HEK293 (cell line): ENCODE measurements at regions of chr1 and their contacts with region 1.

Region 1: DNA sequence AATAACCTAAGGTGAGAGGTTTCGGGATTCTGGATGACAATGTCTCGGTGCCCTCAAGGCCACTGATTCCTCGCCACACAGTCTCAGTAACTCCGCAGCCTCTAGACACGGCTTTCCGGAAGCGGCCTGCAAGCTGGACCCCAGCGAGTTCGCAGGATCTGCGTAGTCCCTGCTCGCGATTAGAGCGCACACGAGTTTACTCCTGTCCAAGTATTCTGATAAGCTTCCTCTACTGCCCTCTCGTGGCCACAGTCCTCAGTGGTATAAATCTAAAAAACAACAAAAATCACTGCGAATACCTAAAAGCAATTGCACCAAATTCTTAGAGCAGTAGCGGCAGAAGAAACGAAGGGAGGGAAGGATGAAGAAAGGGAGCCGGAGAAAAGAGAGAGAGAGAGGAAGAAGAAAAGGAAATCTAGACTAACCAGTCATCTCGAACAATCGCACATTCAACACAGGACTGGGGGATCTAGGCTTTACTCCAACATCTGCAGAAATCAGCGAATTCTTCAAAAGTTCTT is 1.1 kb upstream of the PLXNA2 start:
- H3K4me3 ChIP-seq: no peak overlapping the region
- H3K27ac ChIP-seq: peak overlapping the region; percentile 56; the same call in 1 of the 2 replicates
- H3K4me1 ChIP-seq: no peaks in the 10 kb centered on the region; the same call in 1 of the 2 replicates
- CTCF ChIP-seq: peak; percentile 78

Region 2: DNA sequence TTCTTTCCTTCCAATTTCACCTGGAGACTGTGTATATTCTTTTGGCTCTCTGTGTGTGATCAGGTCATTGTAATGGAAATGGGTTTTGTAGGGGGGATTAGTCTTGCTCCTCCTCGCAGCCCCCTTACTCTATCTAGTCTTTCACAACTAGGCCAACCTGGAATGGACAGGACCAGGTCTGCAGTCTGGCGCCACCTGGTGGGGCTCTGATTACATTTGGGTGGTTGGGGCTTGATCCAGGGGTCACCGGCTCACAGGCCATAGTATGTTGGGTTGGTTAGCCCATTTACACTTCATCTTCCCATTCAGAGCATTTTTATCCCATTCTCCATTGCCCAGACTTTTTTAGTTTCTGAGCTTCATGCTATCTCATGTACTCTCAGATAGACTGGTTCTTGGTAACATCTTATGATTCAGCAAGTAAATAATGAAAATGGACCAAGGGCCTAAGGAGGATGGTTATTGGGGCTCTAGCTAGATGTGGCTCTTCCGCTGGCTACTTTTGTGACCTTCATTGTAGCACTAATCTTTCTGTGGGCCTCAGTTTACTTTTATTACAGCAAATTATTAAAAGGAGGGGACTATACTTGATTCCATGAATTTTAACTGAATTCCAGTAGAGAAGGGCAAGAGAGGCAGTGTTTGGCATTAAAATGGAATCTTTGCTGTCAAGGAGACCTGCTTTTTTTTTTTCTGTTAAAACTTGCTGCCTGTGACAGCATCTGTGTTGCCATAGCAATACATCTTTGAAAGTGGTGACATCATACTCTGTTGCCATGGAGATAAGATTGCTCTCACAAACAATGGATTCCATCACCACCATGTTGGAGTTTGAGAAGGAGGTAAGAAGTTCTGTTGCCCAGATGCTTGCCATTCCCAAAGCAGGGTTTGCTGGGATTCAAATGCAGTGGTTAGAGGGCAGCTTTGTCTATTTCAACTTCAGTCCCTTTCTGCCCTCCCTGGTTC is 151.2 kb before region 1 on chr1:
- CTCF ChIA-PET with region 1: interaction called, 15 read pairs
- POLR2A ChIA-PET with region 1: interaction called, 4 read pairs
- H3K4me3 ChIP-seq: no peak overlapping the region
- H3K27ac ChIP-seq: no peak overlapping the region
- H3K4me1 ChIP-seq: no peaks in the 10 kb centered on the region
- CTCF ChIP-seq: peak; percentile 45; the same call in 1 of the 2 replicates

Region 3: DNA sequence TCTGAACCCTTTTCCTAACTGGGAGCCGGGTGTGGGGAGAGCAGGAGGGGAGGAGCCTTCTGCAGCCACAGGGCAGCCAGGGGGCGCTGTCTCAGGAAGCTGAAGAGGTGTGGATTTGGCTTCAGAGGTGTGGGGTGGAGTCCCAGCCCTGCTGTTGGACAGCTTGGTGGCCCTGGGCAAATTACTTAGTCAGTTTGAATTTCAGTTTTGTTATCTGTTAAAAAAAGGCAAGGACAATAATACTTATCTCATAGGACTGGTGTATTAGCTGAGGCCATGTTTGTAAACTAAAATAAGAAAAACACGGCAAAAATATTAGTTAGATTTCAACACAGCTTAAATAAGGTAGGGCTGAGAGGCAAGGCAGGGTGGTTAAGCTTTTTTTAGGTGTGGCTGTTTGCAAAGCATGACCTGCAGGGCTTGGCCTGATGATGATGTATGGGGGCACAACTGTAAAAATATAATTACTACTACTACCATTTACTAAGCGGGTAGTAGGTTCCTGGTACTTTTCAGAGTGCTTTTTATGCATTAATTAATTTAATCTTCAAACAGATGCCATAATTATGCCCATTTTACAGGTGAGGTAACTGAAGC is 112.9 kb before region 1 on chr1:
- CTCF ChIA-PET with region 1: interaction called, 175 read pairs
- POLR2A ChIA-PET with region 1: interaction called, 6 read pairs
- H3K4me3 ChIP-seq: no peak overlapping the region
- H3K27ac ChIP-seq: no peak overlapping the region
- H3K4me1 ChIP-seq: peaks cover 20% of the 10 kb centered on the region
- CTCF ChIP-seq: peak; percentile 83

Region 4: GRCh38 chr1:208233546-208233945 is 11.7 kb before region 1 on chr1:
- CTCF ChIA-PET with region 1: interaction called, 9 read pairs
- POLR2A ChIA-PET with region 1: interaction called, 10 read pairs
- H3K4me3 ChIP-seq: no peak overlapping the region
- H3K27ac ChIP-seq: no peak overlapping the region
- H3K4me1 ChIP-seq: peaks cover 9% of the 10 kb centered on the region; the same call in 1 of the 2 replicates
- CTCF ChIP-seq: no peak

Region 5: GRCh38 chr1:208270651-208271111 is 25.4 kb after region 1 on chr1:
- CTCF ChIA-PET with region 1: interaction called, 10 read pairs
- POLR2A ChIA-PET with region 1: no interaction called
- H3K4me3 ChIP-seq: no peak overlapping the region
- H3K27ac ChIP-seq: no peak overlapping the region
- H3K4me1 ChIP-seq: peaks cover 18% of the 10 kb centered on the region
- CTCF ChIP-seq: no peak